Activated CD8-positive, alpha-beta T cell treated with anti-CD3 and anti-CD28 coated beads for 36 hours (primary cell): ENCODE measurements at regions of chr20 and their contacts with region 1.

Region 1: GRCh38 chr20:59495894-59496510 is 108.3 kb upstream of the PHACTR3 start:
- DNase-seq: peak; percentile 76
- ATAC-seq: peak; percentile 61
- H3K4me3 Mint-ChIP-seq: no peak overlapping the region
- H3K27ac Mint-ChIP-seq: no peak overlapping the region
- H3K4me1 Mint-ChIP-seq: no peaks in the 10 kb centered on the region
- H3K27me3 Mint-ChIP-seq: peaks cover 23% of the 10 kb centered on the region
- CTCF ChIP-seq: peak; percentile 88

Region 2: DNA sequence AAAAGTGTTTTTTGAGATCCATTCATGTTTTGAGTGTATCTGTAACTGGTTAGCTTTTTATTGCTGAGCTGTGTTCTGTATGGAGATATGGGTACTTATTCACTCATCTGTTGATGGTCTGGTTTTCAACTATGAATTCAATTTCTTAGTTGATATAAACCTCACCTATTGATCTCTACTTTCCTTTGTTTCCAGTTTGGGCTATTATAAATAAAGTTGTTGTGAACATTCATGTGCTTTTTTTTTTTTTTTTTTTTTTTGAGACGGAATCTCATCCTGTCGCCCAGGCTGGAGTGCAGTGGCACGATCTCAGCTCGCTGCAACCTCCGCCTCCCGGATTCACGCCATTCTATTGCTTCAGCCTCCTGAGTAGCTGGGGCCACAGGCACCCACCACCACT is 21.4 kb before region 1 on chr20:
- CTCF ChIA-PET with region 1: interaction called, 14 read pairs
- POLR2A ChIA-PET with region 1: no interaction called
- intact Hi-C with region 1: no loop called
- DNase-seq: no peak
- ATAC-seq: no peak
- H3K4me3 Mint-ChIP-seq: no peak overlapping the region
- H3K27ac Mint-ChIP-seq: no peak overlapping the region
- H3K4me1 Mint-ChIP-seq: no peaks in the 10 kb centered on the region
- H3K27me3 Mint-ChIP-seq: peaks cover 4% of the 10 kb centered on the region
- CTCF ChIP-seq: no peak

Region 3: GRCh38 chr20:59508729-59509128 is 12.7 kb after region 1 on chr20:
- CTCF ChIA-PET with region 1: interaction called, 23 read pairs
- POLR2A ChIA-PET with region 1: interaction called, 3 read pairs
- intact Hi-C with region 1: no loop called
- DNase-seq: no peak
- ATAC-seq: no peak
- H3K4me3 Mint-ChIP-seq: no peak overlapping the region
- H3K27ac Mint-ChIP-seq: no peak overlapping the region
- H3K4me1 Mint-ChIP-seq: no peaks in the 10 kb centered on the region
- H3K27me3 Mint-ChIP-seq: no peaks in the 10 kb centered on the region
- CTCF ChIP-seq: no peak

Region 4: GRCh38 chr20:59518881-59519688 is 23.1 kb after region 1 on chr20:
- CTCF ChIA-PET with region 1: interaction called, 11 read pairs
- POLR2A ChIA-PET with region 1: no interaction called
- intact Hi-C with region 1: no loop called
- DNase-seq: peak; percentile 28
- ATAC-seq: peak; percentile 77
- H3K4me3 Mint-ChIP-seq: no peak overlapping the region
- H3K27ac Mint-ChIP-seq: no peak overlapping the region
- H3K4me1 Mint-ChIP-seq: no peaks in the 10 kb centered on the region
- H3K27me3 Mint-ChIP-seq: peaks cover 51% of the 10 kb centered on the region
- CTCF ChIP-seq: peak; percentile 89